A549 (cell line): ENCODE measurements at regions of chr16 and their contacts with region 1.

Region 1: GRCh38 chr16:70162041-70162451 is 11.5 kb upstream of the CLEC18C start:
- DNase-seq: peak; percentile 64 to 66
- ATAC-seq: peak; percentile 60 to 67; a peak in 5 of 6 replicates
- H3K4me3 ChIP-seq: no peak overlapping the region
- H3K27ac ChIP-seq: peak overlapping the region; percentile 21 to 30; a peak in 2 of 6 replicates
- H3K4me1 ChIP-seq: peaks cover 16% of the 10 kb centered on the region
- CTCF ChIP-seq: no peak
- EP300 ChIP-seq: no peak
- POLR2A ChIP-seq: no peak
- RAD21 ChIP-seq: no peak

Region 2: DNA sequence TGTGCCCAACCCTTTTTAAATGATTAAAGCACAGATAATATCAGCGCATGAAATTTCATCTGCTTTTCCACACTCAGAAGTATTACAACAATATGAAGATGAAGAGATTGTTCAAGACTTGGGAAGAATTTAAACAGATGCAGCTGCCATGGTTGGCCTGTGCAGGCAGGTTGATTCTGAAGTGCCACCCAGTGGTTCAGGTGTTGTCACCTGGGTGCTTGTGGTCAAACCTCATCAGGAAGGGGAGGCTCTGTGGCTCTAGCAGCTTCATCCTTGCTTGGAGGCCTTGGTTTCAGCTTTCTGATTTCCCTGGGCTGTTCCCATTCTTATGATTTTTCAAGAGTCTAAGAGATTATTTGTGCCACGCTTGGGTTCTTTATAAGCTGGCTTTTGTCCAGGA is 10.7 kb before region 1 on chr16:
- CTCF ChIA-PET with region 1: interaction called, 18 read pairs
- POLR2A ChIA-PET with region 1: interaction called, 3 read pairs
- DNase-seq: peak in 1 of 2 experiments; percentile 3
- ATAC-seq: no peak
- H3K4me3 ChIP-seq: no peak overlapping the region
- H3K27ac ChIP-seq: no peak overlapping the region
- H3K4me1 ChIP-seq: peaks cover 7% of the 10 kb centered on the region; the same call in 1 of the 3 replicates
- CTCF ChIP-seq: no peak
- EP300 ChIP-seq: no peak
- POLR2A ChIP-seq: no peak
- RAD21 ChIP-seq: no peak